CD4-positive, alpha-beta T cell (primary cell): ENCODE measurements at regions of chr3 and their contacts with region 1.

Region 1: GRCh38 chr3:113019182-113020137 is 28.7 kb downstream of the GTPBP8 start:
- DNase-seq: peak; percentile 57 to 94 (median 76)
- ATAC-seq: peak; percentile 82
- H3K4me3 ChIP-seq: peak overlapping the region; percentile 78
- H3K4me3 Mint-ChIP-seq: peak overlapping the region; percentile 93
- H3K27ac ChIP-seq: peak overlapping the region; percentile 91 to 93
- H3K27ac Mint-ChIP-seq: peak overlapping the region; percentile 95
- H3K4me1 ChIP-seq: peaks cover 28% of the 10 kb centered on the region
- H3K4me1 Mint-ChIP-seq: peaks cover 72% of the 10 kb centered on the region
- H3K27me3 ChIP-seq: no peaks in the 10 kb centered on the region
- H3K27me3 Mint-ChIP-seq: no peaks in the 10 kb centered on the region
- CTCF ChIP-seq: no peak

Region 2: DNA sequence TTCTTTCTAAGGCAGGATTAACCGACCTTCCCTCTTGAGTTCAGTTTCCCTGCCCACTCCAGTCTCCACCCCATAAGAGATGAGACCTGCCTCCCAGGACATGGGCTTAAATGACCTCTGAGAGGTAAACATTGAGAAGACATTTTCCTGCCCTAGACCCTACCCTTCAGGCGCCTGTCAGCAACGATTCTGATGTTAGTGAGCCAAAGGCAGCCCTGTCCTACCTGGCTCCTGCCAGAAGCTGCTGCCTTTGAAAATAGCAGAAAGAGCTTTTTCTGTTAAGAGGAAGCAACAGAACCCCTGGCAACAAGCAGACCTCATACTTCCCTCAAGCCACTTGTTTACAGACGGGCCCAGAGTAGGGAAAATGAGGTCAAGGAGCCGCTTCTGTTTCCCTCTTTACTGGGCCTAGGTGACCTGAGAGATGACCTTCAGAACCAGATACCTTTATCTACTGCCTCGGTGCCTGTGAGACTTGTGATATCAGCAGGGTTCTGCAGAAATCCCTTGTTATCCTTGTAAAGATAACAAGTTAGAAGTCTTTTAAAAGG is 224.8 kb before region 1 on chr3:
- CTCF ChIA-PET with region 1: no interaction called
- POLR2A ChIA-PET with region 1: no interaction called
- intact Hi-C with region 1: no loop called
- DNase-seq: peak in 4 of 14 experiments; percentile 8 to 59 (median 28)
- ATAC-seq: peak; percentile 43
- H3K4me3 ChIP-seq: no peak overlapping the region
- H3K4me3 Mint-ChIP-seq: no peak overlapping the region
- H3K27ac ChIP-seq: peak overlapping the region in 1 of 2 donors; percentile 14
- H3K27ac Mint-ChIP-seq: peak overlapping the region; percentile 78
- H3K4me1 ChIP-seq: peaks cover 16% of the 10 kb centered on the region
- H3K4me1 Mint-ChIP-seq: peaks cover 35% of the 10 kb centered on the region
- H3K27me3 ChIP-seq: no peaks in the 10 kb centered on the region
- H3K27me3 Mint-ChIP-seq: no peaks in the 10 kb centered on the region
- CTCF ChIP-seq: no peak

Region 3: DNA sequence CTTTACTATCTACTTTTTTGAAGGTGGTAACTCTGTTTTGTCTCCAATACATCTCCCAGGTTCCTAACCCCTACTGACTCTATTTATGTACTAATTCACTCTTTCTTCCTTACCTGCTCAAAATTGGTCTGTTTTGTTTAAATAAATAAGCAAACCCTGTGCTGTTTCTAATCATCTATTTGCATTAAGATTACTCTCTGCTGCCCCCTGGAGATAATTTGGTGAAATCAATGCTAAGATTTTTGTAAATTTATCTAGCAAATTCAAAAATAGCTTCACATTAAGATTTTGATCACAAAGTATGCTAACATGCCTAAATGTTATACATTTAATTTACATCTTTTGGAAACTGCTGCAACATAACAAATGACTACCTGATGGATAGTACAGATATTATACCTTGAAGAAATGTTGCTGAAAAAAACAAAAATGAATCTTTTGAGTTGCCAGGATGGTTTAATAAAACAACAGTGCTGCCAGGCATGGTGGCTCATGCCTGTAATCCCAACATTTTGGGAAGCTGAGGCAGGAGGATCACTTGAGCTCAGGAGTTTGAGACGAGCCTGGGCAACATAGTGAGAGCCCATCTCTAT is 40.1 kb before region 1 on chr3:
- CTCF ChIA-PET with region 1: interaction called, 10 read pairs
- POLR2A ChIA-PET with region 1: no interaction called
- intact Hi-C with region 1: loop called in 1 of 2 experiments (anchors 5 kb)
- DNase-seq: peak in 4 of 14 experiments; percentile 39 to 77 (median 72)
- ATAC-seq: no peak
- H3K4me3 ChIP-seq: no peak overlapping the region
- H3K4me3 Mint-ChIP-seq: peak overlapping the region; percentile 1
- H3K27ac ChIP-seq: no peak overlapping the region
- H3K27ac Mint-ChIP-seq: peak overlapping the region; percentile 6
- H3K4me1 ChIP-seq: peaks cover 36% of the 10 kb centered on the region
- H3K4me1 Mint-ChIP-seq: peaks cover 73% of the 10 kb centered on the region
- H3K27me3 ChIP-seq: no peaks in the 10 kb centered on the region
- H3K27me3 Mint-ChIP-seq: no peaks in the 10 kb centered on the region
- CTCF ChIP-seq: peak; percentile 94

Region 4: DNA sequence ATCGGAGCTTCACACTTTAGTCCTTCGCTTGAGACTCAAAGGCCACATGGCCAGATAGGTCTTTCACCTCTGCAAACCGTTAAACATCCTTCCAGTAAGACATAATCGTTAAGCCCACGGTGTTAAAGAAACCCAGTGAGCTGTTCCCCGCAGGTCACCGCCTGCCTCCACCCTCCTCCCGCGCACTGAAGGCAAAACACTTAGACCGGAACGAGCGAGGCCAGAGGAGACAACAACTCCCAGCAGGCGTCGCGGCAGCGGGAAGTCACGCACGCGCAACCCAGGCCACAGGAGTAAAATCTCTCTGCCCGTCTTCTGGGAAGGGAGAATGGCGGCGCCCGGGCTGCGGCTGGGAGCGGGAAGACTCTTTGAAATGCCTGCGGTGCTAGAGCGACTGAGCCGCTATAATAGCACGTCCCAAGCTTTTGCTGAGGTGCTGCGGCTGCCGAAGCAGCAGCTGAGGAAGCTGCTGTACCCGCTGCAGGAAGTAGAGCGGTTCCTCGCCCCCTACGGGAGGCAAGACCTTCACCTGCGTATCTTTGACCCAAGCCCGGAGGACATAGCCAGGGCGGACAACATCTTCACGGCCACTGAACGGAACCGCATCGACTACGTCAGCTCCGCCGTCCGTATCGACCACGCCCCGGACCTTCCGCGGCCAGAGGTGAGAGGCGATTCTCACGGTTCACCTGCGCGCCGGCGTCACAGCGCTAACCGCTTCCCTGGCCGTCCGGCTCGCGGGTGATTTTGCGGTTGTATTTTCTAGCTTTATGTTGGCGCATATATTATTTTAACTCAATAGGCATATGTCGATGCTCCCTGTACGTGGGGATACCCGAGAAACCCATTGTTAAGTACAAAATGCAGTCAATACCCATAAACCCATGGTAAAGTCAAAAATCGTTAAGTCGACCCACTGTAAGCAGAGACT is 28.5 kb before region 1 on chr3 and contains the start of gene GTPBP8:
- CTCF ChIA-PET with region 1: interaction called, 4 read pairs
- POLR2A ChIA-PET with region 1: interaction called, 40 read pairs
- intact Hi-C with region 1: loop called in 1 of 2 experiments (anchors 5 kb)
- DNase-seq: peak; percentile 68 to 93 (median 80)
- ATAC-seq: peak; percentile 89
- H3K4me3 ChIP-seq: peak within 1 kb of the TSS; percentile 74
- H3K4me3 Mint-ChIP-seq: peak within 1 kb of the TSS; percentile 97
- H3K27ac ChIP-seq: peak within 1 kb of the TSS; percentile 85 to 96
- H3K27ac Mint-ChIP-seq: peak within 1 kb of the TSS; percentile 93
- H3K4me1 ChIP-seq: peaks cover 26% of the 10 kb centered on the region
- H3K4me1 Mint-ChIP-seq: peaks cover 81% of the 10 kb centered on the region
- H3K27me3 ChIP-seq: no peaks in the 10 kb centered on the region
- H3K27me3 Mint-ChIP-seq: no peaks in the 10 kb centered on the region
- CTCF ChIP-seq: no peak
- total RNA-seq, gene GTPBP8: 27.0 to 30.3 TPM

Region 5: GRCh38 chr3:113002679-113003078 is 16.8 kb before region 1 on chr3:
- CTCF ChIA-PET with region 1: interaction called, 11 read pairs
- POLR2A ChIA-PET with region 1: interaction called, 114 read pairs
- intact Hi-C with region 1: loop called in 1 of 2 experiments (anchors 1 kb)
- DNase-seq: peak in 13 of 14 experiments; percentile 20 to 74 (median 44)
- ATAC-seq: peak; percentile 47
- H3K4me3 ChIP-seq: no peak overlapping the region
- H3K4me3 Mint-ChIP-seq: peak overlapping the region; percentile 59
- H3K27ac ChIP-seq: peak overlapping the region; percentile 22 to 52
- H3K27ac Mint-ChIP-seq: peak overlapping the region; percentile 90
- H3K4me1 ChIP-seq: peaks cover 27% of the 10 kb centered on the region
- H3K4me1 Mint-ChIP-seq: peaks cover 90% of the 10 kb centered on the region
- H3K27me3 ChIP-seq: no peaks in the 10 kb centered on the region
- H3K27me3 Mint-ChIP-seq: no peaks in the 10 kb centered on the region
- CTCF ChIP-seq: no peak

Region 6: DNA sequence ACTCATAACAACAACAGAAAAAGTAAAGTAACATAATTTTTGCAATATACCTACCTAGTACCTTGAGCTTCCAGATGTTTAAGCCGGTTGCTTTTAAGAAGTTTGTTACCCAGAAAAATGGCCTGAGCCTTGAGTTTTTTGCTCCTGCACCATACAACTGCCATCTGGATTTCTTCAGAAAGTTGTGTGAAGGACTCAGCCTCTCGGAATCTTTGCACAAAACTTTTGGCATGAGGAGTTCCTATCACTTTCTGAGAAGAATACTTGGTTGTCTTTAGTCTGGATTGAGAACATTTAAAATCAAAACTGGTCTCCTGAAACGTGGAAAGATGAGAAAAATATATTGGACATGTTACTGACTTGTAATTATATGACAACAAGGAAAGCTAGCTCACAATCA is 11.3 kb before region 1 on chr3:
- CTCF ChIA-PET with region 1: interaction called, 11 read pairs
- POLR2A ChIA-PET with region 1: interaction called, 114 read pairs
- intact Hi-C with region 1: loop called in 1 of 2 experiments (anchors 1 kb)
- DNase-seq: no peak
- ATAC-seq: no peak
- H3K4me3 ChIP-seq: no peak overlapping the region
- H3K4me3 Mint-ChIP-seq: no peak overlapping the region
- H3K27ac ChIP-seq: no peak overlapping the region
- H3K27ac Mint-ChIP-seq: peak overlapping the region; percentile 90
- H3K4me1 ChIP-seq: peaks cover 21% of the 10 kb centered on the region
- H3K4me1 Mint-ChIP-seq: peaks cover 87% of the 10 kb centered on the region
- H3K27me3 ChIP-seq: no peaks in the 10 kb centered on the region
- H3K27me3 Mint-ChIP-seq: no peaks in the 10 kb centered on the region
- CTCF ChIP-seq: no peak